Activated CD4-positive, alpha-beta memory T cell treated with anti-CD3 and anti-CD28 coated beads for 36 hours (primary cell): ENCODE measurements at regions of chr17 and their contacts with region 1.

Region 1: DNA sequence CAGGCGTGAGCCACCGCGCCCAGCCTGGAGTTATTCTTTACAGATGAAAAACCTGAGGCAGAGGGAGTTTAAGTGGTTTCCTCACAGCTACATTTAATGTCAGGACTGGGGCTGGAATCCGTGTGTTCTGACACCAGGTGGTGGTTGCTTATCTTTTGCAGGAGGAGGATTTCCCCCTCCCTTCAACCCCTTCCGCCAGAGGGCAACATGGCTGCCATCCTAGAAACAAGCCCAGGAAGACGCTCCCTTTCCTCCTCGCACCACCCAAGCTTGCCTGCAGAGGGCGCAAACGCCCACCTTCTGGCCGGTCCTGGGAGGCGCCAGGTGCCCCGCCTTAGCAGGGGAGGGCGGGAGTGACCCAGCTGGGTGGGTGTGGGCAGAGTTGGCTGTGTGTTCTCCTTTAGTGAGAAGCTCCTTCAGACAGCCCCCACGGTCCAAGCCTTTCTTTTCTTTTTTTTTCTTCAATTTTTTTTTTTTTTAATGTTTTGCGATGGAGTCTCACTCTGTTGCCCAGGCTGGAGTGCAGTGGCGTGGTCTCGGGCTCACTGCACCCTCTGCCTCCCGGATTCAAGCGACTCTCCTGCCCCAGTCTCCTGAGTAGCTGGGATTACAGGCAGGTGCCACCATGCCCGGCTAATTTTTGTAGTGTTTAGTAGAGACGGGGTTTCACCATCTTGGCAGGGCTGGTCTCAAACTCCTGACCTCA is 9.9 kb upstream of the RAP1GAP2 start:
- DNase-seq: peak; percentile 96
- H3K4me3 Mint-ChIP-seq: no peak overlapping the region
- H3K27ac Mint-ChIP-seq: no peak overlapping the region
- H3K4me1 Mint-ChIP-seq: peaks cover 3% of the 10 kb centered on the region
- H3K27me3 Mint-ChIP-seq: peaks cover 2% of the 10 kb centered on the region

Region 2: GRCh38 chr17:2796164-2797125 is 10.1 kb after region 1 on chr17 and contains the start of gene RAP1GAP2:
- CTCF ChIA-PET with region 1: interaction called, 14 read pairs
- POLR2A ChIA-PET with region 1: interaction called, 4 read pairs
- intact Hi-C with region 1: no loop called
- DNase-seq: peak; percentile 80
- H3K4me3 Mint-ChIP-seq: peak within 1 kb of the TSS; percentile 74
- H3K27ac Mint-ChIP-seq: no peak within 1 kb of the TSS
- H3K4me1 Mint-ChIP-seq: peaks cover 66% of the 10 kb centered on the region
- H3K27me3 Mint-ChIP-seq: peaks cover 17% of the 10 kb centered on the region
- total RNA-seq, gene RAP1GAP2: 1.9 to 2.3 TPM

Region 3: GRCh38 chr17:2814481-2815341 is 28.4 kb after region 1 on chr17:
- CTCF ChIA-PET with region 1: interaction called, 20 read pairs
- POLR2A ChIA-PET with region 1: interaction called, 15 read pairs
- intact Hi-C with region 1: no loop called
- DNase-seq: peak; percentile 95
- H3K4me3 Mint-ChIP-seq: peak overlapping the region; percentile 13
- H3K27ac Mint-ChIP-seq: peak overlapping the region; percentile 23
- H3K4me1 Mint-ChIP-seq: peaks cover 17% of the 10 kb centered on the region
- H3K27me3 Mint-ChIP-seq: peaks cover 6% of the 10 kb centered on the region

Region 4: DNA sequence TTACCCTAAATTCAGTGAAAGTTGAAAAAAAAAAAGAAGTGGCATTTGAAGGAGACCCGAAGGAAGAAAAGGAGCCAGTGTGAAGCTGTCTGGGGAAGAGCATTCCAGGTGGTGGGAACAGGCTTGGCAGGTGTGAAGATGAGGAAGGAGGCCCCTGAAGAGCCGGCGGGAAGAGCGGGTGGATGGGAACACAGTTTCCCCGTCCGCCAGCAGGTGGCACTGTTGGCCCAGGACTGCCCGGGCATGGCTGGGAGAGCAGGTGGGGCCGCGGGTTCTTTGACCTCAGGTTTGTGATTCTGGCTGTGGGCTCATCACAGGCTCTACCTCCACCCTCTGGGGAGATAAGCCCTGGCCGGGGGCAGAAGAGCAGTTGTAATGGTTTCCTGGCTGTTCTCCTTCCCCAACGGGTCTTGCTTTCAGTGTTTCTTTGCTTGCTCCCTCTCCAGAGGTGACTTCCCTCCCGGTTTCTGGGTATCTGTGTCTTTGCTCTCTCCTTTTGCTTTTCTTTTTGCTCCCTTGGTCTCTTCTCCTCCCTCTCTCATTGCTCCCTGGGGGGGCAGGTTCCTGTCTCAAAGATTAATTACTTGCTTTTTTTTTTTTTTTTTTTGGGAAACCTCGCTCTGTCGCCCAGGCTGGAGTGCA is 42.2 kb after region 1 on chr17:
- CTCF ChIA-PET with region 1: interaction called, 11 read pairs
- POLR2A ChIA-PET with region 1: no interaction called
- intact Hi-C with region 1: loop called (anchors 2 kb)
- DNase-seq: peak; percentile 87
- H3K4me3 Mint-ChIP-seq: peak overlapping the region; percentile 7
- H3K27ac Mint-ChIP-seq: no peak overlapping the region
- H3K4me1 Mint-ChIP-seq: peaks cover 21% of the 10 kb centered on the region
- H3K27me3 Mint-ChIP-seq: no peaks in the 10 kb centered on the region

Region 5: DNA sequence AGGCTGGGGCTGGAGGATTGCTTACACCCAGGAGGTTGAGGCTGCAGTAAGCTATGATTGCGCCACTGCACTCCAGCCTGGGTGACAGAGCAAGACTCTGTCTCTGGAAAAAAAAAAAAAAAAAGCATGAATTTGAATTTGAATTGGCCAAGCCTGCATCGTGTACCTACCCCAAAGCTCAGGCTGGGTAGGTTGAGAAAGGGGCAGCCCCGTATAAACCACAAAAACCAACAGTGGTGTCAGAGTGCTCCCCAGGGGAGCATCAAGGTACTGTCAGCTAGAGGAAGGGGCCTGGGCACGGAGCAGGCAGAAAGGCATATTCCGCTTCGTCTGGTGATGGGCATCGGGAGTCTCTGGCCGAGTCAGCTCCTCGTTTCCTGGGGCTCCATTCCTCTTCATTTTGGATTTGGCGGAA is 50.8 kb after region 1 on chr17:
- CTCF ChIA-PET with region 1: interaction called, 28 read pairs
- POLR2A ChIA-PET with region 1: no interaction called
- intact Hi-C with region 1: loop called (anchors 2 kb)
- DNase-seq: peak; percentile 77
- H3K4me3 Mint-ChIP-seq: no peak overlapping the region
- H3K27ac Mint-ChIP-seq: no peak overlapping the region
- H3K4me1 Mint-ChIP-seq: peaks cover 10% of the 10 kb centered on the region
- H3K27me3 Mint-ChIP-seq: no peaks in the 10 kb centered on the region

Region 6: GRCh38 chr17:3012926-3013581 is 226.7 kb after region 1 on chr17:
- CTCF ChIA-PET with region 1: interaction called, 23 read pairs
- POLR2A ChIA-PET with region 1: no interaction called
- intact Hi-C with region 1: loop called (anchors 5 kb)
- DNase-seq: peak; percentile 71
- H3K4me3 Mint-ChIP-seq: no peak overlapping the region
- H3K27ac Mint-ChIP-seq: no peak overlapping the region
- H3K4me1 Mint-ChIP-seq: no peaks in the 10 kb centered on the region
- H3K27me3 Mint-ChIP-seq: no peaks in the 10 kb centered on the region